Body of pancreas (tissue), 4 donors: ENCODE measurements at regions of chr9 and their contacts with region 1.

Region 1: GRCh38 chr9:15416880-15417279 is 5.8 kb upstream of the SNAPC3 start:
- DNase-seq: peak; percentile 47 to 68 (median 66)
- ATAC-seq: peak; percentile 86
- H3K4me3 ChIP-seq: no peak overlapping the region
- H3K27ac ChIP-seq: no peak overlapping the region
- H3K4me1 ChIP-seq: peaks cover 7% of the 10 kb centered on the region
- H3K27me3 ChIP-seq: no peaks in the 10 kb centered on the region
- CTCF ChIP-seq: peak; percentile 31 to 77 (median 52)
- POLR2A ChIP-seq: no peak

Region 2: GRCh38 chr9:15211160-15211814 is 205.6 kb before region 1 on chr9:
- intact Hi-C with region 1: loop called (anchors 10 kb)
- DNase-seq: peak; percentile 61 to 79 (median 66)
- ATAC-seq: peak; percentile 77
- H3K4me3 ChIP-seq: no peak overlapping the region
- H3K27ac ChIP-seq: no peak overlapping the region
- H3K4me1 ChIP-seq: peaks cover 3% of the 10 kb centered on the region
- H3K27me3 ChIP-seq: no peaks in the 10 kb centered on the region
- CTCF ChIP-seq: peak; percentile 76 to 88 (median 83)
- POLR2A ChIP-seq: no peak

Region 3: GRCh38 chr9:15277400-15278090 is 139.3 kb before region 1 on chr9:
- intact Hi-C with region 1: loop called (anchors 10 kb)
- DNase-seq: no peak
- ATAC-seq: peak; percentile 52
- H3K4me3 ChIP-seq: no peak overlapping the region
- H3K27ac ChIP-seq: no peak overlapping the region
- H3K4me1 ChIP-seq: peaks cover 15% of the 10 kb centered on the region
- H3K27me3 ChIP-seq: no peaks in the 10 kb centered on the region
- CTCF ChIP-seq: peak in 6 of 7 experiments; percentile 10 to 56 (median 50)
- POLR2A ChIP-seq: no peak